AG04450 (cell line): ENCODE measurements at regions of chr22 and their contacts with region 1.

Region 1: DNA sequence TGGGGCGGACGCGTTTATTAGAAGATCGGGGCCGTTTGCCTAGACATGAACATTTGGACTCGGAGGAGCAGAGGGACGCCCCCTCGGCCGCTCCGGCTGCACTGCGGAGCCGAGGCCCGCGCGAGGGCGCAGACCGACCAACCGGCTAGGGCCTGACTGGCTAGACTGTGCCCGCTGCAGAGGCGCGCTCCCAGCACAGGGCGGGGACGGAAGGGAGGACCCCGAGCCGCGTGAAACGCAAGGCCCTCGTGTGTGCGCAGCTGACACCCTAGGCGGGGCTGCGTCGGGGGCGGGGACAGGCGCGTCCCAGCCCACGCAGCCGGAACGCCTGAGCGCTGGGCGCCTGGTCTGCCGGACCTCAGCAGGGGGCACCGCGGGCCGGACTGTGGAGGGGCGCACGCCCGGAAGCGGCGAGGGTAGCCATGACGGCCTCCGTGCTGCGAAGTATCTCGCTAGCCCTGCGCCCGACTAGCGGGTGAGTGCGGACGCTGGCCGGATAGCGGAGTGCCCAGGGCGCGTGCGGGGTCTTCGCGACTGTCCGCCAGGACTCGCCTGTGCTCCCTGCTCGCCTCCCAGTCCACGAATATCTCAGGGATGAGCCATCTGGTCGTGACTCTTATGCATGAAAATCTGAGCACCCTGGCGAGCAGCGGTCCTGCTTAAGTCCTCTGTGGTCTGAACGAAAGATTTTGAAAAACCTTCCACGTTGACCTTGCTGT is at the start of gene MRPL40:
- DNase-seq: peak; percentile 83
- H3K4me3 ChIP-seq: peak within 1 kb of the TSS; percentile 87
- H3K27ac ChIP-seq: peak within 1 kb of the TSS; percentile 84
- H3K27me3 ChIP-seq: no peaks in the 10 kb centered on the region
- CTCF ChIP-seq: no peak
- polyA plus RNA-seq, gene MRPL40: 42.3 and 49.5 TPM in 2 replicates

Region 2: GRCh38 chr22:19402642-19403191 is 29.6 kb before region 1 on chr22:
- CTCF ChIA-PET with region 1: no interaction called
- POLR2A ChIA-PET with region 1: no interaction called
- DNase-seq: no peak
- H3K4me3 ChIP-seq: no peak overlapping the region
- H3K27ac ChIP-seq: no peak overlapping the region
- H3K27me3 ChIP-seq: no peaks in the 10 kb centered on the region
- CTCF ChIP-seq: no peak

Region 3: GRCh38 chr22:19419464-19420178 is 12.7 kb before region 1 on chr22:
- CTCF ChIA-PET with region 1: no interaction called
- POLR2A ChIA-PET with region 1: interaction called, 10 read pairs
- DNase-seq: no peak
- H3K4me3 ChIP-seq: no peak overlapping the region
- H3K27ac ChIP-seq: no peak overlapping the region
- H3K27me3 ChIP-seq: no peaks in the 10 kb centered on the region
- CTCF ChIP-seq: no peak

Region 4: GRCh38 chr22:19479357-19480172 is 47.3 kb after region 1 on chr22 and contains the start of gene CDC45:
- CTCF ChIA-PET with region 1: no interaction called
- POLR2A ChIA-PET with region 1: interaction called, 13 read pairs
- DNase-seq: peak; percentile 96
- H3K4me3 ChIP-seq: peak within 1 kb of the TSS; percentile 98
- H3K27ac ChIP-seq: peak within 1 kb of the TSS; percentile 99
- H3K27me3 ChIP-seq: no peaks in the 10 kb centered on the region
- CTCF ChIP-seq: no peak
- polyA plus RNA-seq, gene CDC45: 8.3 and 9.3 TPM in 2 replicates